ENCODE measurements at regions of chr3 and their contacts with region 1.

Region 1: GRCh38 chr3:35639254-35640186 is at the start of gene ARPP21:
- DNase-seq: peak; percentile 35 to 82 (median 63)
- H3K4me3 ChIP-seq: peak within 1 kb of the TSS; percentile 37 to 92 (median 70)
- H3K27ac ChIP-seq: peak within 1 kb of the TSS; percentile 11 to 96 (median 90)
- H3K27me3 ChIP-seq: peaks cover 0 to 22% (median 0%) of the 10 kb centered on the region in 45 donors
- CTCF ChIP-seq: peak in 10 of 56 donors; percentile 6 to 33 (median 14)
- total RNA-seq, gene ARPP21: 77.6 to 293 (median 180) TPM

Region 2: GRCh38 chr3:34387826-34388564 is 1251.5 kb before region 1 on chr3:
- intact Hi-C with region 1: loop called in 1 of 2 experiments (anchors 5 kb)
- DNase-seq: peak in 7 of 10 donors; percentile 17 to 89 (median 54)
- H3K4me3 ChIP-seq: no peak overlapping the region
- H3K27ac ChIP-seq: peak overlapping the region in 11 of 59 donors; percentile 6 to 81 (median 23)
- H3K27me3 ChIP-seq: no peaks in the 10 kb centered on the region
- CTCF ChIP-seq: peak in 4 of 56 donors; percentile 3 to 9 (median 8)

Region 3: DNA sequence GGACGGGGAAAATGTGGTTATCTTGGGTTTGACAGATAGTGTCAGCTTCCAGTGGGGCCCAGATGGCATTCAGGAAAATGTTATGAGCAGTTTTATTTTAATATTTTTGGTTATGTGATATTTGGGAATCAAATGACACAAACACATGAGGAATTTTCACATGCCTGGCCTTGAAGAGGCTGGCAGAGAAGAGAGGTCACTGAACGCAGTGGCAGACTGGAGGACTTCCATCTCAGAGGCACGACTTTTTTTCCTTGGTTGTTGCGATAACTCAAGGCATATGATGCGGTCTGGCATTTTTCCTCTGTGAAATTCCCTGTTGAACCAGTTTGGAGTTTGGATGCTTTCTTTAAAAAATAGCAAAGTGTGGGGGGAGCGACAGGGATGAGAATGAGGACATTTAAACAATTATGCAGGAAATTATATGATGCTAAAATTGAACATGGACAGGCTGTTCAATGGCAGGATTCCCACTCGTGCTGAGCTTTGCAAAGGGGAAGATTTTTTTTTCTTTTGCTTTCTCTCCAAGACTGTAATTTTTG is 37.1 kb before region 1 on chr3:
- intact Hi-C with region 1: loop called (anchors 2 to 5 kb)
- DNase-seq: peak in 4 of 10 donors; percentile 5 to 70 (median 28)
- H3K4me3 ChIP-seq: no peak overlapping the region
- H3K27ac ChIP-seq: peak overlapping the region in 14 of 59 donors; percentile 0 to 64 (median 30)
- H3K27me3 ChIP-seq: no peaks in the 10 kb centered on the region
- CTCF ChIP-seq: no peak

Region 4: GRCh38 chr3:35946121-35946853 is 306.8 kb after region 1 on chr3:
- intact Hi-C with region 1: loop called in 1 of 2 experiments (anchors 10 kb)
- DNase-seq: no peak
- H3K4me3 ChIP-seq: peak overlapping the region in 2 of 59 donors; percentile 8 to 15
- H3K27ac ChIP-seq: peak overlapping the region in 6 of 59 donors; percentile 15 to 60 (median 20)
- H3K27me3 ChIP-seq: no peaks in the 10 kb centered on the region
- CTCF ChIP-seq: peak; percentile 30 to 79 (median 64)

Measured in dorsolateral prefrontal cortex (tissue), 120 donors.